Caco-2 (cell line): ENCODE measurements at regions of chr14 and their contacts with region 1.

Region 1: GRCh38 chr14:103185051-103185992 is 62.1 kb downstream of the TNFAIP2 start:
- DNase-seq: peak in 1 of 2 experiments; percentile 45
- H3K4me3 ChIP-seq: no peak overlapping the region
- H3K4me3 Mint-ChIP-seq: peak overlapping the region; percentile 70
- H3K27ac Mint-ChIP-seq: peak overlapping the region; percentile 100
- H3K4me1 ChIP-seq: peaks cover 34% of the 10 kb centered on the region
- H3K4me1 Mint-ChIP-seq: peaks cover 22% of the 10 kb centered on the region
- H3K27me3 ChIP-seq: no peaks in the 10 kb centered on the region
- H3K27me3 Mint-ChIP-seq: no peaks in the 10 kb centered on the region
- CTCF ChIP-seq: peak; percentile 58 to 74

Region 2: DNA sequence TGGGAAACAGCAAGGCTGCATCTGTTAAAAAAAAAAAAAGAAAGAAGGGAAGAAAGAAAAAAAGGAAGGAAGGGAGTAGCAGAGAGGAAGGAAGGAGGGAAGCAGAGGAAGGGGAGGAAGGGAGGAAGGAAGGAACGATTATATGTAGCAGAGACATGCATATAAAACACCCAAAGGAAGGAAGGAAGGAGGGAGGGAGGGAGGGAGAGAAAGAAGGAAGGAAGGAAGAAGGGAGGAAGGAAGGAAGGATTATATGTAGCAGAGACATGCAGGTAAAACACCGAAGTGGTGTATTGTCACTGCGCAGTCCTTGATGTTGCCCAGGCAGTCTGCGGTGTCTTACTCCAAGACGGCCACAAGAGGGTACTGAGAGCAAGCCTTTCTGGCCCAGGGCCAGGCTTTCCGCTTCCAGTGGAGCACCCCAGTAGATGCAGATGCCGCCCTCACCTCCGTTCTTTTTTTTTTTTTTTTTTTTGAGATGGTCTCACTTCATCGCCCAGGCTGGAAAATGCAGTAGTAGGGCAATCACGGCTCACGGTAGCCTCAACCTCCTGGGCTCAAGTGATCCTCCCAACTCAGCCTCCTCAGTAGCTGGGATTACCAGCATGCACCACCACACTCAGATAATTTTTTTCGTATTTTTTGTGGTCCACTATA is 107.1 kb before region 1 on chr14:
- CTCF ChIA-PET with region 1: no interaction called
- POLR2A ChIA-PET with region 1: no interaction called
- intact Hi-C with region 1: loop called (anchors 2 kb)
- DNase-seq: peak; percentile 80 to 81
- H3K4me3 ChIP-seq: no peak overlapping the region
- H3K4me3 Mint-ChIP-seq: no peak overlapping the region
- H3K27ac Mint-ChIP-seq: no peak overlapping the region
- H3K4me1 ChIP-seq: no peaks in the 10 kb centered on the region
- H3K4me1 Mint-ChIP-seq: no peaks in the 10 kb centered on the region
- H3K27me3 ChIP-seq: no peaks in the 10 kb centered on the region
- H3K27me3 Mint-ChIP-seq: no peaks in the 10 kb centered on the region
- CTCF ChIP-seq: peak; percentile 80 to 84

Region 3: GRCh38 chr14:103126493-103127304 is 58.6 kb before region 1 on chr14:
- CTCF ChIA-PET with region 1: interaction called, 11 read pairs
- POLR2A ChIA-PET with region 1: no interaction called
- intact Hi-C with region 1: loop called (anchors 5 kb)
- DNase-seq: peak; percentile 78 to 90
- H3K4me3 ChIP-seq: peak overlapping the region; percentile 38
- H3K4me3 Mint-ChIP-seq: peak overlapping the region; percentile 63
- H3K27ac Mint-ChIP-seq: peak overlapping the region; percentile 20
- H3K4me1 ChIP-seq: peaks cover 7% of the 10 kb centered on the region
- H3K4me1 Mint-ChIP-seq: peaks cover 6% of the 10 kb centered on the region
- H3K27me3 ChIP-seq: no peaks in the 10 kb centered on the region
- H3K27me3 Mint-ChIP-seq: no peaks in the 10 kb centered on the region
- CTCF ChIP-seq: peak in 1 of 2 experiments; percentile 12

Region 4: GRCh38 chr14:103141119-103141796 is 44.1 kb before region 1 on chr14:
- CTCF ChIA-PET with region 1: interaction called, 4 read pairs
- POLR2A ChIA-PET with region 1: no interaction called
- intact Hi-C with region 1: loop called (anchors 5 kb)
- DNase-seq: peak; percentile 43 to 59
- H3K4me3 ChIP-seq: no peak overlapping the region
- H3K4me3 Mint-ChIP-seq: no peak overlapping the region
- H3K27ac Mint-ChIP-seq: no peak overlapping the region
- H3K4me1 ChIP-seq: peaks cover 5% of the 10 kb centered on the region; the same call in 1 of the 2 replicates
- H3K4me1 Mint-ChIP-seq: peaks cover 17% of the 10 kb centered on the region
- H3K27me3 ChIP-seq: no peaks in the 10 kb centered on the region
- H3K27me3 Mint-ChIP-seq: no peaks in the 10 kb centered on the region
- CTCF ChIP-seq: peak; percentile 31 to 58

Region 5: GRCh38 chr14:103292426-103293374 is 107.4 kb after region 1 on chr14:
- CTCF ChIA-PET with region 1: interaction called, 4 read pairs
- POLR2A ChIA-PET with region 1: no interaction called
- intact Hi-C with region 1: loop called (anchors 2 kb)
- DNase-seq: peak; percentile 66 to 83
- H3K4me3 ChIP-seq: no peak overlapping the region
- H3K4me3 Mint-ChIP-seq: no peak overlapping the region
- H3K27ac Mint-ChIP-seq: no peak overlapping the region
- H3K4me1 ChIP-seq: no peaks in the 10 kb centered on the region
- H3K4me1 Mint-ChIP-seq: no peaks in the 10 kb centered on the region
- H3K27me3 ChIP-seq: no peaks in the 10 kb centered on the region
- H3K27me3 Mint-ChIP-seq: no peaks in the 10 kb centered on the region
- CTCF ChIP-seq: peak; percentile 78 to 92

Region 6: GRCh38 chr14:103500148-103500990 is 315.0 kb after region 1 on chr14:
- CTCF ChIA-PET with region 1: no interaction called
- POLR2A ChIA-PET with region 1: no interaction called
- intact Hi-C with region 1: no loop called
- DNase-seq: peak; percentile 74 to 84
- H3K4me3 ChIP-seq: no peak overlapping the region
- H3K4me3 Mint-ChIP-seq: no peak overlapping the region
- H3K27ac Mint-ChIP-seq: peak overlapping the region; percentile 47
- H3K4me1 ChIP-seq: no peaks in the 10 kb centered on the region
- H3K4me1 Mint-ChIP-seq: no peaks in the 10 kb centered on the region
- H3K27me3 ChIP-seq: no peaks in the 10 kb centered on the region
- H3K27me3 Mint-ChIP-seq: no peaks in the 10 kb centered on the region
- CTCF ChIP-seq: peak; percentile 80 to 95